Ovary (tissue), 10 donors: ENCODE measurements at regions of chr16 and their contacts with region 1.

Region 1: GRCh38 chr16:30032083-30032819 is 1.2 kb upstream of the TLCD3B start:
- DNase-seq: peak in 4 of 5 donors; percentile 36 to 51 (median 47)
- H3K4me3 ChIP-seq: no peak overlapping the region
- H3K27ac ChIP-seq: no peak overlapping the region
- H3K4me1 ChIP-seq: no peaks in the 10 kb centered on the region
- H3K27me3 ChIP-seq: peaks cover 3% of the 10 kb centered on the region
- CTCF ChIP-seq: peak; percentile 46 to 50 (median 47)
- EP300 ChIP-seq: no peak
- POLR2A ChIP-seq: no peak

Region 2: DNA sequence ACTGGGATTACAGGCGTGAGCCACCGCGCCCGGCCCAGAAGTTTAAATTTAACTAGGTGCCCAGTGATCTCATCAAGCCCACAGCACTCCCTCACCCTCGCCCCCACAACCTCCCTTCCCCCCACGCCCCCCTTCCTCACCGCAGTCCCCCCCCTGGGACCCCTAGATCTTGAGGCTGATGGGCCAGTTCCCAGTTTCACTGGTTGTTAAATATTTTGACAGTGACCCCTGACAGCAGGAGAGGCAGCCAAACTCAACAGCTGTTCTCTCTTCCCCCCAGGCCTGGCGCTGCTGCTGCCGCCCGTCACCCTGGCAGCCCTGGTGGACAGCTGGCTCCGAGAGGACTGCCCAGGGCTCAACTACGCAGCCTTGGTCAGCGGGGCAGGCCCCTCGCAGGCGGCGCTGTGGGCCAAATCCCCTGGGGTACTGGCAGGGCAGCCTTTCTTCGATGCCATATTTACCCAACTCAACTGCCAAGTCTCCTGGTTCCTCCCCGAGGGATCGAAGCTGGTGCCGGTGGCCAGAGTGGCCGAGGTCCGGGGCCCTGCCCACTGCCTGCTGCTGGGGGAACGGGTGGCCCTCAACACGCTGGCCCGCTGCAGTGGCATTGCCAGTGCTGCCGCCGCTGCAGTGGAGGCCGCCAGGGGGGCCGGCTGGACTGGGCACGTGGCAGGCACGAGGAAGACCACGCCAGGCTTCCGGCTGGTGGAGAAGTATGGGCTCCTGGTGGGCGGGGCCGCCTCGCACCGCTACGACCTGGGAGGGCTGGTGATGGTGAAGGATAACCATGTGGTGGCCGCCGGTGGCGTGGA is 337.7 kb before region 1 on chr16:
- intact Hi-C with region 1: loop called in 3 of 4 experiments (anchors 10 kb)
- DNase-seq: peak in 2 of 5 donors; percentile 18 to 31
- H3K4me3 ChIP-seq: no peak overlapping the region
- H3K27ac ChIP-seq: no peak overlapping the region
- H3K4me1 ChIP-seq: peaks cover 7% of the 10 kb centered on the region
- H3K27me3 ChIP-seq: no peaks in the 10 kb centered on the region
- CTCF ChIP-seq: no peak
- EP300 ChIP-seq: no peak
- POLR2A ChIP-seq: no peak

Region 3: DNA sequence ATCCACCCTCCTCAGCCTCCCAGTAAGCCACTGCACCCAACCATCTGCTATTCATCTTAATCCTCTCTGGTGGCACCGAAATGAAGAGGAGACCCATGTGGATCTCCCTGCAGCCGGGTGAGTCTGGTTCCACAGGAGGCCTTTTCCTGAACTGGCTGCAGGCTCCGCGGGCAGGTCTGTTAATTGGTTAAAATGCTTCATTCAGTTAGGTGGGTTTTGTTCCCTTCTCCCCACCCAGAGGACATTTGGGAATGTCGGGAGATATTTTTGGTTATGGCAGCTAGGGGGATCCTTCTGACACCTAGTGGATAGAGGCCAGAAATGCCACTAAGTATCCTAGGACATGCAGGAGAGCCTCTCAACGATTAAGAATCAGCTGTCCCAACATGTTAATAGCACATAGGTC is 303.1 kb before region 1 on chr16:
- intact Hi-C with region 1: loop called in 1 of 4 experiments (anchors 10 kb)
- DNase-seq: peak in 2 of 5 donors; percentile 13 to 23
- H3K4me3 ChIP-seq: no peak overlapping the region
- H3K27ac ChIP-seq: no peak overlapping the region
- H3K4me1 ChIP-seq: no peaks in the 10 kb centered on the region
- H3K27me3 ChIP-seq: no peaks in the 10 kb centered on the region
- CTCF ChIP-seq: peak in 2 of 3 donors; percentile 50 to 64
- EP300 ChIP-seq: no peak
- POLR2A ChIP-seq: no peak

Region 4: DNA sequence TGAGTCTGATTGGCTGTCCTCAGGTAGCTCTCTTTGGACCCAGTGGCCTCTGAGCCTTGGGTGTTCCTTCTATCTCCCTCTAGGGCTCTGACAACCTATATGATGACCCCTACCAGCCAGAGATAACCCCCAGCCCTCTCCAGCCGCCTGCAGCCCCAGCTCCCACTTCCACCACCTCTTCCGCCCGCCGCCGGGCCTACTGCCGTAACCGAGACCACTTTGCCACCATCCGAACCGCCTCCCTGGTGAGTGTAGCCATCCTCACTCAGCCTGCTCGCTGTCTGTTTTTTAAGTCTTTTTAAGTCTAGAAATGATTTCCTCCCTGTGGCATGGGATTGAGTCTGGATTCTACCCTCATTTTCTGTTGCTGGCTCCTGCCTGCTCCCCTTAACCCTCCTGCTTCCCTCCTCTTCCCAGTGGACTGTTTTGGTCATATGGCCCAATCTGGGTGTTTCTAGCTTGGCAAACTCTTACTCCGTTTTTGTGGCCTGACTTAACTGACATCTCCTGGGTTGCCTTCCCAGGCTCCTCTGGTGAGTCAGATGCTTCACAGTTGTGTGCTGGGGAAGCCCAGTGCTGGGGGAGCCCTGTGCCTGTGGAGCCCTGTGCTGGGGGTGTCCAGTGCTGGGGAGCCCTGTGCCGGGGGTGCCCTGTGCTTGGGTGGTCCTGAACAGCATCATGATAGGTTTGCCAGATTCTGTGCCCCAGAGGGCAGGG is 48.7 kb before region 1 on chr16:
- intact Hi-C with region 1: no loop called
- DNase-seq: no peak
- H3K4me3 ChIP-seq: no peak overlapping the region
- H3K27ac ChIP-seq: no peak overlapping the region
- H3K4me1 ChIP-seq: no peaks in the 10 kb centered on the region
- H3K27me3 ChIP-seq: no peaks in the 10 kb centered on the region
- CTCF ChIP-seq: no peak
- EP300 ChIP-seq: no peak
- POLR2A ChIP-seq: no peak